Psoas muscle (tissue), 8 donors: ENCODE measurements at regions of chr4 and their contacts with region 1.

Region 1: DNA sequence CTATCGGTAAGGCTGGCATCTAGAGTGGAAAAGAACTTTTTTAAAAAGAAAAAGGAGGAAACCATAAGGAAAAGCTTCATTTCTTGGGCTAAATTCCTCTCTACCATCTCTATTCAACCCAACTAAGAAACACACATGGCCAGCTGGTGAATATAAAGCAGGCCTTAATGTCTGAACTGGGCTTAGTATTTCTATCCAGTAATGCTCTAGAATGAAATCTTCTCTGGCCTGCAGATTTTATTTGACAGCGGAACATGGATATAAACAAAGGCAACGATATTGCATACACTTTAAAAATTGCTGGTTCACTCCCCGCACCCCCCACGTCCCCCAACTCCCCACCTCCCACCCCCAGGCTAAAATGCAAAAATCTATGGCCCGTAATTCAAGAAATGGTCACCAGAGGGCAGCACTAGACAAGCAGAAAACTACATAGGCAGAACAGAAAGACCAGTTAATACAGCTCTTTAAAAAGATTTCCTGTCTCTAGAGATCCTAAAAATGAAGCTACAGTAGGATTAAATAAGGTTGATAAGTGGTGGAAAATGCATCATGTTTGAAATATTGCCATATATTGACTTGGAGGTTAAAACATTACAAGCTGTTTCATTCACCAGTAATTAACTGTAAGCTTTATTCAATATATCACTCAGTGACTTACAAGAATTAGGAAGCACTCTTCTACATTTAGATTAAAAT is 155.2 kb upstream of the GALNT7 start:
- DNase-seq: no peak
- ATAC-seq: peak; percentile 53 to 81 (median 70)
- H3K4me3 ChIP-seq: no peak overlapping the region
- H3K27ac ChIP-seq: no peak overlapping the region
- H3K4me1 ChIP-seq: no peaks in the 10 kb centered on the region
- H3K27me3 ChIP-seq: no peaks in the 10 kb centered on the region
- CTCF ChIP-seq: peak; percentile 68

Region 2: GRCh38 chr4:173257732-173258717 is 244.6 kb after region 1 on chr4:
- intact Hi-C with region 1: loop called (anchors 1 to 5 kb)
- DNase-seq: peak; percentile 43 to 54
- ATAC-seq: peak; percentile 81 to 90 (median 87)
- H3K4me3 ChIP-seq: no peak overlapping the region
- H3K27ac ChIP-seq: no peak overlapping the region
- H3K4me1 ChIP-seq: no peaks in the 10 kb centered on the region
- H3K27me3 ChIP-seq: no peaks in the 10 kb centered on the region
- CTCF ChIP-seq: peak; percentile 86

Region 3: GRCh38 chr4:173301518-173302201 is 288.3 kb after region 1 on chr4:
- intact Hi-C with region 1: loop called (anchors 2 to 5 kb)
- DNase-seq: no peak
- ATAC-seq: no peak
- H3K4me3 ChIP-seq: no peak overlapping the region
- H3K27ac ChIP-seq: no peak overlapping the region
- H3K4me1 ChIP-seq: no peaks in the 10 kb centered on the region
- H3K27me3 ChIP-seq: no peaks in the 10 kb centered on the region
- CTCF ChIP-seq: peak; percentile 66

Region 4: DNA sequence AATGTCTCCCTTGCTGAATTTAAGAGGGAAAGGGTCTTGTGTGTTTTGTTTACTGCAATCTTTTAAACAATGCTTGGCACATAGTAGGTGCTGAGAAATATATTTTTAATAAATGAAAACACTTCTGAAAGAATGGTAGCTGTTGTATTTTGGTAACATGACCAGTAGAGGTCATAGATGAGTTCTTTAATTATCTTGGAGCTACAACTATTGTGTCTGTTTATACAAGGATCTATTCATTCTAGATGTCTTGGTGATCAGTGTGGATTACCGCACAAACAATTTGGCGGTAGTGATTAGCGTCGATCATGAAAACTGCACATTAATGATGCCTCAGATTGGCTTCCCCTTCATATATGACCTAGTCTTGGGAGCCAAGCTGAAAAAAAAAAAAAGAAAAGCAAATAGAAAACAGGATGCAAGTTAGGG is 407.0 kb after region 1 on chr4:
- intact Hi-C with region 1: loop called in 1 of 2 experiments (anchors 5 kb)
- DNase-seq: no peak
- ATAC-seq: peak in 1 of 4 donors; percentile 60
- H3K4me3 ChIP-seq: no peak overlapping the region
- H3K27ac ChIP-seq: no peak overlapping the region
- H3K4me1 ChIP-seq: no peaks in the 10 kb centered on the region
- H3K27me3 ChIP-seq: no peaks in the 10 kb centered on the region
- CTCF ChIP-seq: peak; percentile 49

Region 5: GRCh38 chr4:173522123-173522950 is 509.0 kb after region 1 on chr4:
- intact Hi-C with region 1: loop called in 1 of 2 experiments (anchors 10 kb)
- DNase-seq: peak; percentile 81 to 85
- ATAC-seq: peak; percentile 90 to 95 (median 90)
- H3K4me3 ChIP-seq: peak overlapping the region; percentile 65
- H3K27ac ChIP-seq: no peak overlapping the region
- H3K4me1 ChIP-seq: peaks cover 11% of the 10 kb centered on the region
- H3K27me3 ChIP-seq: peaks cover 0 to 94% (median 36%) of the 10 kb centered on the region in 3 donors
- CTCF ChIP-seq: no peak